ENCODE measurements at regions of chr2 and their contacts with region 1.

Region 1: DNA sequence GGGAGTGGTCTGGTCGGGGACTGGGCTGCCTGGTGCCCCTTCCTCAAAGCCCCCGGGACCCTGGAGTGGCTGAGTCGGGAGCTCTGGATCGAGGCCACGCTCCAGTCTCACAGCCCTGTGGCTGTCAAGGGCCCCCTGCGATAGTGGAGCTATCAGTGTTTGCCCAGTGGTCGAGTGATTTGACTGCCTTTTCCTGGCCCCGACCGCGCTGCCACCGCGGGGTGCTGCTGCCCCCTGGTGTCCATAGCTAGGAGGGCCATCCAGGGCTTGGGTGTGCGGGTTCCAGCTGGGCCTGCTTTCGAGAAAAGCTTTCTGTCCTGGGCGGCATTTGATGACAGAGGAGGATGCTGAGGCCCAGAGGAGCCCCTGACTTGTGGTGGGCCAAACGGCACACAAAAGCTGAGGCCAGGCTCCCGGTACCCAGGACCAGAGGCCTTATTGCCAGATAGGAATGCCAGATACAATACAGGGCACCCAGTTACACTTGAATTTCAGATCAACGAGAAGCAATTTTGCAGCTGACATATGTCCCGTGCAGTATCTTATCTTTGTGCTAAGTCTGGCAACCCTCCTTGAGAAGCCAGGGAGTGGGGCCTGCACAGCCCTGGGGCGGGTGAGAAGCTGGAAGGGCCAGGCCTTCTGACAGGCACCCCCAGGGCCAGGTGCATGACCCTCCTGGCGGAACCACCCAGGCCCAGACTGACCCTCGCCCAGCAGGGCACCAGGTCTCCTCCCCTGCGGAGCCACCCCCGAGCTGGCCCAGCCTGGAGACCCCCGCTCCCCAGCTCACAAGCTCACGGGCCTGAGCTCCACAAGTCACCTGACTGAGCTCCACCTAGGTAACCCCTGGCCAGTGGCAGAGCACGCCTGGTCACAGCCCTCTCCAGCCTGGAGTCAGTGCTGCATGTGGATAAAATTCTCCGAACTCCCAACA is 13.0 kb downstream of the ODC1 start:
- DNase-seq: peak; percentile 72 to 87
- ATAC-seq: peak; percentile 83 to 88 (median 85)
- H3K4me3 ChIP-seq: no peak overlapping the region
- H3K4me3 Mint-ChIP-seq: no peak overlapping the region
- H3K27ac ChIP-seq: no peak overlapping the region
- H3K27ac Mint-ChIP-seq: no peak overlapping the region
- H3K4me1 ChIP-seq: peaks cover 17% of the 10 kb centered on the region
- H3K4me1 Mint-ChIP-seq: peaks cover 6 to 21% of the 10 kb centered on the region in 2 donors
- H3K27me3 ChIP-seq: no peaks in the 10 kb centered on the region
- H3K27me3 Mint-ChIP-seq: peaks cover 8 to 22% of the 10 kb centered on the region in 2 donors
- CTCF ChIP-seq: peak; percentile 85

Region 2: GRCh38 chr2:9813312-9814133 is 621.6 kb before region 1 on chr2:
- intact Hi-C with region 1: loop called (anchors 10 kb)
- DNase-seq: peak; percentile 66 to 82
- ATAC-seq: peak; percentile 73 to 98 (median 95)
- H3K4me3 ChIP-seq: no peak overlapping the region
- H3K4me3 Mint-ChIP-seq: no peak overlapping the region
- H3K27ac ChIP-seq: no peak overlapping the region
- H3K27ac Mint-ChIP-seq: no peak overlapping the region
- H3K4me1 ChIP-seq: peaks cover 11% of the 10 kb centered on the region
- H3K4me1 Mint-ChIP-seq: peaks cover 10 to 20% of the 10 kb centered on the region in 2 donors
- H3K27me3 ChIP-seq: no peaks in the 10 kb centered on the region
- H3K27me3 Mint-ChIP-seq: peaks cover 0 to 9% of the 10 kb centered on the region in 2 donors
- CTCF ChIP-seq: peak; percentile 91

Region 3: GRCh38 chr2:10122386-10123280 is 312.5 kb before region 1 on chr2 and contains the start of gene RRM2:
- intact Hi-C with region 1: loop called (anchors 1 kb)
- DNase-seq: peak; percentile 86 to 93
- ATAC-seq: peak; percentile 73 to 87 (median 78)
- H3K4me3 ChIP-seq: peak within 1 kb of the TSS; percentile 44
- H3K4me3 Mint-ChIP-seq: peak within 1 kb of the TSS; percentile 97
- H3K27ac ChIP-seq: no peak within 1 kb of the TSS
- H3K27ac Mint-ChIP-seq: peak within 1 kb of the TSS; percentile 89 to 92
- H3K4me1 ChIP-seq: peaks cover 55% of the 10 kb centered on the region
- H3K4me1 Mint-ChIP-seq: peaks cover 50 to 54% of the 10 kb centered on the region in 2 donors
- H3K27me3 ChIP-seq: peaks cover 3% of the 10 kb centered on the region
- H3K27me3 Mint-ChIP-seq: no peaks in the 10 kb centered on the region
- CTCF ChIP-seq: no peak
- total RNA-seq, gene RRM2: 16.1 to 22.1 (median 18.5) TPM